Activated CD4-positive, alpha-beta T cell treated with anti-CD3 and anti-CD28 coated beads for 36 hours (primary cell): ENCODE measurements at regions of chr10 and their contacts with region 1.

Region 1: DNA sequence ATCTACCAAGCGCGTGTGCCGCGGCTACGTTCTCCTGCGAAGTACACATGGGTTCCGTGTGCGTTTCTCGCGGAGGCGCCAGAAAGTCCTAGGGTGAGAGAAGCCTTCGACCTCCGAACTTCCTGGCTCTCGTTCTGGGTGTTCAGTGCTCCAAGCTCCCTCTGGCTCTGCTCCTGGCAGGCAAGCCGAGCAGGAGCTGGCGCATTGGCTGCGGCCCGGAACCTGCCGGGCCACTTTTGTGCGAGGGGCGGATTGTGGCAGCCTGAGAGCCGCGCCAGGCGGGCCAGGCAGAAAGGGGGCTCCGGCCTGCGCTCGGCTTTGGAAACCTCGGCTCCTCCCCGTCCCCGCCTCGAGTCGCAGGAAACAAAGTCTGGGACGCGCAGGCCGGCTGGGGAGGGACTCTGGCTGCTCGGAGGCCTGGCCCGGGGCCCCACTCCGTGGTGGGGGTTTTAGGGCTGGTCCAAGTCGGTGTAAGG is 9.6 kb downstream of the EMX2 start:
- DNase-seq: peak; percentile 18
- ATAC-seq: no peak
- H3K4me3 Mint-ChIP-seq: no peak overlapping the region
- H3K27ac Mint-ChIP-seq: no peak overlapping the region
- H3K4me1 Mint-ChIP-seq: peaks cover 11% of the 10 kb centered on the region
- H3K27me3 Mint-ChIP-seq: peaks cover 80% of the 10 kb centered on the region

Region 2: GRCh38 chr10:117137031-117137910 is 414.9 kb before region 1 on chr10:
- CTCF ChIA-PET with region 1: no interaction called
- POLR2A ChIA-PET with region 1: no interaction called
- intact Hi-C with region 1: loop called in 1 of 2 experiments (anchors 5 kb)
- DNase-seq: peak; percentile 31
- ATAC-seq: no peak
- H3K4me3 Mint-ChIP-seq: peak overlapping the region; percentile 23
- H3K27ac Mint-ChIP-seq: no peak overlapping the region
- H3K4me1 Mint-ChIP-seq: peaks cover 29% of the 10 kb centered on the region
- H3K27me3 Mint-ChIP-seq: peaks cover 66% of the 10 kb centered on the region

Region 3: GRCh38 chr10:117609095-117609795 is 57.1 kb after region 1 on chr10:
- CTCF ChIA-PET with region 1: no interaction called
- POLR2A ChIA-PET with region 1: no interaction called
- intact Hi-C with region 1: loop called in 1 of 2 experiments (anchors 5 kb)
- DNase-seq: no peak
- ATAC-seq: no peak
- H3K4me3 Mint-ChIP-seq: no peak overlapping the region
- H3K27ac Mint-ChIP-seq: no peak overlapping the region
- H3K4me1 Mint-ChIP-seq: no peaks in the 10 kb centered on the region
- H3K27me3 Mint-ChIP-seq: peaks cover 12% of the 10 kb centered on the region

Region 4: DNA sequence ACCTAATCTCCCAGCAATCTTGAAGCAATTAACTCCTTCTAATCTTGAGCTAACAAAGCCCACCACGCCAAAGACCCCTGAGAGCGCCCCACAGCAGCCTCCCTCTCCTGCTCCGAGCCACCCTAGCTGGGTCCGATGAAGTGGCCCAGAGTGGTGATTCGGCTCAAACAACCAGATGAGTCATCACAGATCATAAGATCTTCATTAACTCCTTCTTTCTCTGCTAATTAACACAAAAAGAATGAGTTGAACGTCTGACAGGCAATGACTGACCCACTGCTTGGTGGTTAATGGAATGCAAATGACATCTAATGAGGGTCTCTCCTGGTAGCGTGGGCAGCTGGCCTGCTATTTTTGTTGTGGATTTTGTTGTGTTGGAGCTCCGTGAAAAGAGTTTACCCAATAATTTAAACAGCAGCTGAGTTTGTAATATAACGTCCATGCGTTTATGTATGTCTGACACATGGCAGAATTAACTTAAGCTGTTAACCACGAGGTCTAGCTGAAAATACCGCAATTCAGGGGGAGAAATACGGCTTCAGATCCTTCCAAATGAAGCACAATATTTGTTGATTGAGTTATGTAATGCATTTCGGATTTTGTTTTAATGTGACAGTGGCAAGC is 333.1 kb after region 1 on chr10:
- CTCF ChIA-PET with region 1: no interaction called
- POLR2A ChIA-PET with region 1: no interaction called
- intact Hi-C with region 1: no loop called
- DNase-seq: no peak
- ATAC-seq: no peak
- H3K4me3 Mint-ChIP-seq: no peak overlapping the region
- H3K27ac Mint-ChIP-seq: no peak overlapping the region
- H3K4me1 Mint-ChIP-seq: no peaks in the 10 kb centered on the region
- H3K27me3 Mint-ChIP-seq: peaks cover 8% of the 10 kb centered on the region